ENCODE measurements at regions of chr15 and their contacts with region 1.

Region 1: GRCh38 chr15:61871926-61872522 is 188.2 kb downstream of the VPS13C start:
- DNase-seq: peak; percentile 49
- H3K4me3 ChIP-seq: no peak overlapping the region
- H3K27ac ChIP-seq: no peak overlapping the region
- H3K4me1 ChIP-seq: no peaks in the 10 kb centered on the region
- H3K27me3 ChIP-seq: no peaks in the 10 kb centered on the region
- CTCF ChIP-seq: peak in 1 of 2 donors; percentile 31
- POLR2A ChIP-seq: no peak

Region 2: DNA sequence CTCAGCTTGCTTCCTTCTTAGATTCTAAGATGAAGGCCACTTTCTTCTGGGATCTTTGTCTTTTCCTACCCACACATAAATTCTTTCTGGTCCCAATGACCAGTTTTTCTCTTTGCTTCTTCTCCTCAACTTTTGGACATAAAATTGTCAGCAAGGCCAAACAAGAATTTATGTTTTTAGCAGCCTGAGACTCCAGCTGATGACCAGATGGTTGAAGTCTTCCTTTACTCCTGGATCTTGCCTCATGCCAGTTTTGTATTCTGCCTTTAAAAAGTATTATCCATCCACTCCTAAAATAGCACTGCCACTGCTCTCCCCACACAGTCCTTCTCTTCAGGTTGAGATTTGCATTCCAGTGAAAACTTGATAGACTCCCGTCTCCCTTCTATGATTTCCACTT is 47.7 kb before region 1 on chr15:
- CTCF ChIA-PET with region 1: no interaction called
- POLR2A ChIA-PET with region 1: no interaction called
- dilution Hi-C with region 1: no loop called
- intact Hi-C with region 1: no loop called
- DNase-seq: no peak
- H3K4me3 ChIP-seq: no peak overlapping the region
- H3K27ac ChIP-seq: no peak overlapping the region
- H3K4me1 ChIP-seq: no peaks in the 10 kb centered on the region
- H3K27me3 ChIP-seq: peaks cover 0 to 3% of the 10 kb centered on the region in 2 experiments
- CTCF ChIP-seq: no peak
- POLR2A ChIP-seq: no peak

Region 3: DNA sequence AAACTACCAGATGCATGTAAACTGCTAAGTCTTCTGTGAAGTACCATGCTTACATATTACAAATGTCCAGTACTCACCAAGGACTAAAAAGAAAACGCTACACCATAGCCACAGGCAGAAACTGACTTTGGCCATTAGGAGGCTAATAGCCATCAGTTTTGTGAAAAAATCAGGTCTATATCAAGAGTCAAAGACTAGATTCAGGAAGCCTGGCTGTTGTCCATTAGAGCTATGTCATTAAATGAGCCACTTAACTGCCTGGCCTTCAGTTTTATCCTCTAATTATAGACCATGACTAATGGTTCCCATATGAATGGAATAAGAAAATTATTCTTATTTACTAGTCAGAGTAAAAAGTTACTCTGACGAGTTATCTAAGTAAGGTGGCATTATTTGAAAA is 44.1 kb after region 1 on chr15:
- CTCF ChIA-PET with region 1: no interaction called
- POLR2A ChIA-PET with region 1: no interaction called
- dilution Hi-C with region 1: no loop called
- intact Hi-C with region 1: no loop called
- DNase-seq: no peak
- H3K4me3 ChIP-seq: no peak overlapping the region
- H3K27ac ChIP-seq: no peak overlapping the region
- H3K4me1 ChIP-seq: no peaks in the 10 kb centered on the region
- H3K27me3 ChIP-seq: no peaks in the 10 kb centered on the region
- CTCF ChIP-seq: no peak
- POLR2A ChIP-seq: no peak

Region 4: DNA sequence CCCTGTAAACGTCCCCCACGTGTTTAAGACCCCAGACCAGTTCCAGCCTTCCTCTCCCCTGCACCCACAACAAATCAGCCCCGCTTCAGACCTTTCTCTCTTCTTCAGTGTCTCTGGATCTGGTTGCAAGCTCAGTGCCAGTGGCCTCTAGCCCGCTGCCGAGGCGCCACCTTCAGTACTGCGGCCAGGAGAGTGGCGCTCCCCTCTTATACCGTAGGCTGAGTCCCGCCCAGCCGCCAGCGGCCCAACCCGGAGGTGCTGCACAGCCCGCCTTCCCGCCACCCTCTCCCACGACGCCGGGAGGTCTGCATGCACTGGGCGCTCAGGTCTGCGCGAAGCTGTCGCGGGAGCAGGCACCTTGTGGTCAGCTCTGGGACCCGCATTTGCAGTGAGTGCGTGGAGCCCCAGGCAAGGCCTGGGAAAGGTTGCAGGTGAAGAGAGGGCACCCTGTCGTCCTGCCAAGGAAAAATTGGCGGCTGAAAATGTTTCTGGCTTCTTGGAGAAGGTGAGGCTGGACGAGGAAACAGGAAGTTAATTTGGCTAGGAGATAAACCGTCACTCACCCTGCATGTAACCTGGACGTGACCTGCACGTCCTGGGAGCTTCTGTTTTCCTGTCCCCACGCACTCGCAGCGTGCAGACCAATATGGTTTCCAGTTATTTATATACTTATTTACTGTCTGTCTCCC is 293.2 kb after region 1 on chr15 and contains the start of gene C2CD4B:
- CTCF ChIA-PET with region 1: no interaction called
- POLR2A ChIA-PET with region 1: no interaction called
- dilution Hi-C with region 1: no loop called
- intact Hi-C with region 1: loop called (anchors 5 kb)
- DNase-seq: peak; percentile 89
- H3K4me3 ChIP-seq: peak within 1 kb of the TSS; percentile 49 to 75 (median 66)
- H3K27ac ChIP-seq: peak within 1 kb of the TSS; percentile 78
- H3K4me1 ChIP-seq: peaks cover 31% of the 10 kb centered on the region
- H3K27me3 ChIP-seq: no peaks in the 10 kb centered on the region
- CTCF ChIP-seq: peak in 1 of 2 donors; percentile 19
- POLR2A ChIP-seq: peak; percentile 90
- total RNA-seq, gene C2CD4B: 28.4 and 31.7 TPM in 2 replicates